Ascending aorta (tissue), 2 donors: ENCODE measurements at regions of chr2 and their contacts with region 1.

Region 1: GRCh38 chr2:102240640-102241370 is 54.0 kb downstream of the IL1RL2 start:
- DNase-seq: peak; percentile 71 to 95
- H3K4me3 ChIP-seq: peak overlapping the region; percentile 28 to 35
- H3K27ac ChIP-seq: peak overlapping the region; percentile 58 to 71
- H3K4me1 ChIP-seq: peaks cover 0 to 4% of the 10 kb centered on the region in 2 donors
- H3K27me3 ChIP-seq: no peaks in the 10 kb centered on the region
- CTCF ChIP-seq: peak; percentile 92 to 98 (median 98)

Region 2: DNA sequence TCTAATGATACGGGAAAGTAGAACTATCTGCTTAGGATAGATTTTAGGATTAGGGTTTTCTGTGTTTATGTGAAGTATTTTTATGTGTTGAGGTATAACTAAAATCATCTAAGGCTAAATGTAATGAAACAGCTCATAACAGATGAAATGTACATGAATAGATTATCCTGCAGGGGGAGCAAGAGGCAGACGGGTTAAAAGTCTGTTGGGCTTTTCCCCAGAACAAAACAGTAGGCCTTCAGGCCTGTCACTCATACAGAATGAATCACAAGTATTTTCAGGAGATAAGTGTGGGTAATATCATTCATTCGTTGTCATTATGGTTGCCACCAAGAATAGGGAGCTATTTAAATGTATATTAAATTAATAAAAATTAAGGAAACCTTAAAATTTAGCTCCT is 356.9 kb before region 1 on chr2:
- intact Hi-C with region 1: loop called (anchors 5 kb)
- DNase-seq: no peak
- H3K4me3 ChIP-seq: no peak overlapping the region
- H3K27ac ChIP-seq: peak overlapping the region in 1 of 2 donors; percentile 8
- H3K4me1 ChIP-seq: peaks cover 0 to 6% of the 10 kb centered on the region in 2 donors
- H3K27me3 ChIP-seq: no peaks in the 10 kb centered on the region
- CTCF ChIP-seq: peak; percentile 22 to 52 (median 45)

Region 3: GRCh38 chr2:102147935-102148334 is 92.9 kb before region 1 on chr2:
- intact Hi-C with region 1: no loop called
- DNase-seq: no peak
- H3K4me3 ChIP-seq: no peak overlapping the region
- H3K27ac ChIP-seq: no peak overlapping the region
- H3K4me1 ChIP-seq: no peaks in the 10 kb centered on the region
- H3K27me3 ChIP-seq: no peaks in the 10 kb centered on the region
- CTCF ChIP-seq: no peak

Region 4: GRCh38 chr2:102166189-102166845 is 74.5 kb before region 1 on chr2:
- intact Hi-C with region 1: loop called (anchors 2 kb)
- DNase-seq: no peak
- H3K4me3 ChIP-seq: no peak overlapping the region
- H3K27ac ChIP-seq: no peak overlapping the region
- H3K4me1 ChIP-seq: no peaks in the 10 kb centered on the region
- H3K27me3 ChIP-seq: no peaks in the 10 kb centered on the region
- CTCF ChIP-seq: peak; percentile 47 to 74 (median 50)

Region 5: GRCh38 chr2:102187496-102188150 is 53.2 kb before region 1 on chr2:
- intact Hi-C with region 1: loop called (anchors 2 kb)
- DNase-seq: peak in 1 of 2 donors; percentile 67
- H3K4me3 ChIP-seq: peak overlapping the region; percentile 62 to 74
- H3K27ac ChIP-seq: no peak overlapping the region
- H3K4me1 ChIP-seq: peaks cover 0 to 4% of the 10 kb centered on the region in 2 donors
- H3K27me3 ChIP-seq: no peaks in the 10 kb centered on the region
- CTCF ChIP-seq: peak; percentile 24 to 41 (median 33)

Region 6: DNA sequence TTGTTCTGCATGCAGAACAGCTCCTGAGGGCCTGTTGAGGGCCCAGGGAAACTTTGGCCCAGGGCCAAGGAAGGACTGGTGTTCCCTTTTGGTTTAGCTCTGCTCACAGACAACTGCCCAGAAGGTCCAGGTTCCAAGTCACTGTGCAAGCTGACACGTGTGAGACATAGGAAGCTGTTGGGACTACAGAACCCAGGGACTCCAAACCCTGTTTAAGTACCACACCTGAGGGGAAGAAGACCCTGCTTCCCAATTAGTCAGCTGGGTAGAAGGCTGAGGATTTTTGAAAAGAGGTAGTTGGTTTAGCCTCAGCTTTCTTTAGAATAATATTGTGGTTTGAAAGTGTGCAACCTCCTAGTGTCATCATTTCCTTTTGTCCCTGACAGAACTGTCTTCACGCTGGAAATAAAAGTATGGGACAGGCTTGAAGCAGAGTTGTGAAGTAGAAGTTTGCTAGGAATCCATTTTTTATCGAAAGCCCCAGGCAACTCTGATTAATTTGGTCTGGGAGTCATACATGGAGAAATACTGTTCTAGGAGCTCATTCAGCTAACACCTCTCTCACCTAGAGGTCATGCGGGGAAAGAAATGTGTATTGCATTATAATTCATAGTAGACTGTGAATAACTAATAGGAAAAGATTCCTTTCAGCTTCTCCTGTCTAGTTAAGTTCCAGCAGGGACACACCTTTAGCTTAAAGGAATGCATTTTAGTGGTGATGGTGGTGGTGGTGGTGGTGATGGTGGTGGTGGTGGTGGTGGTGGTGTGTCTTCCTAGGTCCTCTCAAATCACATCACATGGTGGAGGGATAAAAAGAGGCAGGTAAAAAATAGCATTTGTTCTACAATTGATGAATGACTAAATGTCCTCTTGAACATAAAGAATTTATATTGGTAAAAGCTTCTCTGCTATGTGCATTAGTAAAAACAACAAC is 50.8 kb after region 1 on chr2:
- intact Hi-C with region 1: no loop called
- DNase-seq: no peak
- H3K4me3 ChIP-seq: no peak overlapping the region
- H3K27ac ChIP-seq: no peak overlapping the region
- H3K4me1 ChIP-seq: no peaks in the 10 kb centered on the region
- H3K27me3 ChIP-seq: peaks cover 4% of the 10 kb centered on the region
- CTCF ChIP-seq: no peak

Region 7: GRCh38 chr2:102301867-102302362 is 61.1 kb after region 1 on chr2:
- intact Hi-C with region 1: no loop called
- DNase-seq: no peak
- H3K4me3 ChIP-seq: no peak overlapping the region
- H3K27ac ChIP-seq: no peak overlapping the region
- H3K4me1 ChIP-seq: no peaks in the 10 kb centered on the region
- H3K27me3 ChIP-seq: peaks cover 4% of the 10 kb centered on the region
- CTCF ChIP-seq: peak in 1 of 3 experiments; percentile 33